Gastrocnemius medialis (tissue), 4 donors: ENCODE measurements at regions of chr17 and their contacts with region 1.

Region 1: DNA sequence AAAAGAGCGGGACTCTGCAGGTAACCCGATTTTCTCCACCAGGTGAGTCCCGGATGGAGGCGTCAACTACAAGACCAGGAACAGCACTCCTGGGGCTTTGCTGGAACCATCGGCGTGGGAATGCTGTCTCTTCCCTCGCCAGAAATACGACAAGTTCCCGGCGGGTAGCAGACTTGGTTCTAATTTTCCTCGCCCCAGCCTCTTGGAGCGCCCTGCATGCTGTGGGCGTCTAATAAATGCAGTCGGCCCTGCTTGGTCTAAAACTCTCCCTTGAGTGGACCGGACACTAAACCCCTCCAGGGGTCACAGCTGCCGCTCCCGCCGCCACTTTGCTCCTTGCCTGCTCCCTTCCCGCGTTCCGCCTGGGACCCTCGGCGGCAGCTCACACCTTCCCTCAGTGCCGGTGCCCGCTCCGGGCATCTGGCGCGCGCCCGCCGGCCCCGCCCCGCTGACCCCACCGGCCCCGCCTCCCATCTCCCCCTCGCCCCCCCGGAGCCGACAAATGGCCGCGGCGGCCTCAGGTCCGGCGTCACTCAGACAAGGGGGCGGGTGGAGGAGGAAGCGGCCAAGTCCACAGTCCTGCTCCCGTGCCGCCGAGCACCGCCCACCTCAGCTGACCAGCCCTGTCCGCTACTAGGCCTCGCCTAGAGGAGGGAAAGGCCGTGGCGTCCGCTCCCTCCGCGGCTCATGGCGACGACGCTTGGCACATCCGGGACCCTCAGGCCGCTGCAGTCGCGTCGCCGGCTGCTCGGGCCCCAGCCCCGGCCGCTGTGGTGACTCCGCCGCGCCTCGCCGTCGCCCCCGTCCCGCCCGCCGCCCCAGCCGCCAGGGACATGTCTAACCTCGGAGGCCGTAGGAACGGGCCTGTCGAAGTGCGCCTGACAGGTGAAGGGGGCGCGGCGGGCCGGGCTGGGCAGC is 65.8 kb downstream of the KPNA2 start:
- DNase-seq: peak; percentile 96
- ATAC-seq: peak; percentile 97 to 98
- H3K4me3 ChIP-seq: peak overlapping the region; percentile 79 to 99 (median 82)
- H3K27ac ChIP-seq: peak overlapping the region; percentile 86 to 97 (median 91)
- H3K4me1 ChIP-seq: peaks cover 13 to 14% of the 10 kb centered on the region in 2 donors
- H3K27me3 ChIP-seq: no peaks in the 10 kb centered on the region
- CTCF ChIP-seq: peak in 1 of 5 experiments; percentile 11
- POLR2A ChIP-seq: peak; percentile 84 to 95

Region 2: DNA sequence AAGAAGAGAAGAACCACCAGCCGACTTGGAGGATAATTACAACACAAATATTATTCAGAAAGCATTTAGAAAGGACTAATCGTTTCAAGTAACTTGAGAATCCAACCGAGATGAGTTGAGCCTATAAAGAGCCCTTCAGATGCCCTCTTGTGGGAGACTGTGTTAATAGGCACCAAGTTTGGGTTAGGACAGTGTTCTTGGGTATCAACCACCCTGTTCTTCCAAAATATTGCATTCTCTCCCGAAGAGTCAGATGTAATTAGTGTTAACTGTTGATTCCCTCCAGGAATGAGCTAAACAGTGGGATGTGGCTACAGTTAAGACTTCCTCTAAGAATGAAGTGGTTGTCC is 471.4 kb before region 1 on chr17:
- in situ Hi-C with region 1: no loop called
- intact Hi-C with region 1: no loop called
- DNase-seq: no peak
- ATAC-seq: no peak
- H3K4me3 ChIP-seq: no peak overlapping the region
- H3K27ac ChIP-seq: no peak overlapping the region
- H3K4me1 ChIP-seq: no peaks in the 10 kb centered on the region
- H3K27me3 ChIP-seq: no peaks in the 10 kb centered on the region
- CTCF ChIP-seq: peak in 3 of 5 experiments; percentile 22 to 41 (median 28)
- POLR2A ChIP-seq: no peak

Region 3: GRCh38 chr17:68019675-68020408 is 81.5 kb before region 1 on chr17:
- in situ Hi-C with region 1: no loop called
- intact Hi-C with region 1: no loop called
- DNase-seq: peak; percentile 87 to 95
- ATAC-seq: peak; percentile 94 to 97
- H3K4me3 ChIP-seq: peak overlapping the region; percentile 66 to 79 (median 69)
- H3K27ac ChIP-seq: peak overlapping the region; percentile 85 to 92 (median 89)
- H3K4me1 ChIP-seq: peaks cover 0 to 6% of the 10 kb centered on the region in 2 donors
- H3K27me3 ChIP-seq: no peaks in the 10 kb centered on the region
- CTCF ChIP-seq: peak; percentile 33 to 72 (median 58)
- POLR2A ChIP-seq: peak in 1 of 2 donors; percentile 35

Region 4: DNA sequence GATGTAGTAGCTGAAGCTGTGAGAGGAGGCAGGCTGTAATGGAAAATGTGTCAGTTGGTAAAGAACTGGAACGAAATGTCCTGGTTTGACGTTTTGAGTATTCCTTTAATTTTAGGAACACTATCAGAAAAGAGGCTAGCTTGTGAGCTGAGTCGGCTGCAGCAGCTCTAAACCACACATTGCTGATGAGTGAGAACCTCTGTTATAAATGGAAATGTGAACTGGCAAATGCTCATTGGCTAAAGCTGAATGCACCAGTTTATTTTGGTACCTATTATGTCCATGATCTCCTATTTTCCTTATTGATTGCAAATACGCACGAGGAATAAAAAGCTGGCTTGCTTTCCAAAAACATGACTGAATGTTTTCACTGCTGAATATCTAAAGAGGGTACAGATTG is 367.0 kb after region 1 on chr17:
- in situ Hi-C with region 1: no loop called
- intact Hi-C with region 1: loop called (anchors 5 kb)
- DNase-seq: no peak
- ATAC-seq: peak in 1 of 2 donors; percentile 54
- H3K4me3 ChIP-seq: no peak overlapping the region
- H3K27ac ChIP-seq: peak overlapping the region in 3 of 4 donors; percentile 21 to 72 (median 55)
- H3K4me1 ChIP-seq: peaks cover 4 to 7% of the 10 kb centered on the region in 2 donors
- H3K27me3 ChIP-seq: no peaks in the 10 kb centered on the region
- CTCF ChIP-seq: no peak
- POLR2A ChIP-seq: peak in 1 of 2 donors; percentile 20

Region 5: GRCh38 chr17:68539548-68540467 is 438.5 kb after region 1 on chr17:
- in situ Hi-C with region 1: no loop called
- intact Hi-C with region 1: no loop called
- DNase-seq: no peak
- ATAC-seq: no peak
- H3K4me3 ChIP-seq: no peak overlapping the region
- H3K27ac ChIP-seq: peak overlapping the region in 1 of 4 donors; percentile 31
- H3K4me1 ChIP-seq: peaks cover 18 to 23% of the 10 kb centered on the region in 2 donors
- H3K27me3 ChIP-seq: no peaks in the 10 kb centered on the region
- CTCF ChIP-seq: no peak
- POLR2A ChIP-seq: no peak